Heart left ventricle (tissue), 16 donors: ENCODE measurements at regions of chr10 and their contacts with region 1.

Region 1: GRCh38 chr10:96395931-96396877 is 37.4 kb upstream of the OPALIN start:
- DNase-seq: peak; percentile 63 to 71 (median 68)
- ATAC-seq: peak in 3 of 4 donors; percentile 61 to 74 (median 63)
- H3K4me3 ChIP-seq: no peak overlapping the region
- H3K27ac ChIP-seq: peak overlapping the region in 1 of 12 donors; percentile 70
- H3K4me1 ChIP-seq: peaks cover 0 to 49% (median 15%) of the 10 kb centered on the region in 12 donors
- H3K27me3 ChIP-seq: peaks cover 0 to 9% (median 0%) of the 10 kb centered on the region in 9 donors
- CTCF ChIP-seq: peak; percentile 67 to 90 (median 86)
- POLR2A ChIP-seq: no peak

Region 2: GRCh38 chr10:96513698-96514561 is 117.7 kb after region 1 on chr10 and contains the start of gene TLL2:
- intact Hi-C with region 1: loop called (anchors 1 to 5 kb)
- DNase-seq: peak; percentile 88 to 94 (median 92)
- ATAC-seq: peak; percentile 96 to 97 (median 96)
- H3K4me3 ChIP-seq: peak within 1 kb of the TSS; percentile 41 to 71 (median 64)
- H3K27ac ChIP-seq: peak within 1 kb of the TSS in 11 of 12 donors; percentile 27 to 79 (median 68)
- H3K4me1 ChIP-seq: peaks cover 4 to 35% (median 16%) of the 10 kb centered on the region in 12 donors
- H3K27me3 ChIP-seq: peaks cover 0 to 33% (median 0%) of the 10 kb centered on the region in 9 donors
- CTCF ChIP-seq: peak; percentile 64 to 97 (median 76)
- POLR2A ChIP-seq: peak in 1 of 2 donors; percentile 66
- total RNA-seq, gene TLL2: 1.8 to 8.6 (median 3.6) TPM

Region 3: GRCh38 chr10:96743988-96744585 is 347.9 kb after region 1 on chr10:
- intact Hi-C with region 1: loop called in 4 of 10 experiments (anchors 5 to 10 kb)
- DNase-seq: no peak
- ATAC-seq: peak in 2 of 4 donors; percentile 42 to 56
- H3K4me3 ChIP-seq: no peak overlapping the region
- H3K27ac ChIP-seq: no peak overlapping the region
- H3K4me1 ChIP-seq: peaks cover 0 to 43% (median 0%) of the 10 kb centered on the region in 12 donors
- H3K27me3 ChIP-seq: no peaks in the 10 kb centered on the region
- CTCF ChIP-seq: peak in 11 of 12 donors; percentile 7 to 43 (median 24)
- POLR2A ChIP-seq: no peak

Region 4: GRCh38 chr10:96831867-96832720 is 435.9 kb after region 1 on chr10 and contains the start of gene LCOR:
- intact Hi-C with region 1: loop called in 6 of 10 experiments (anchors 5 to 10 kb)
- DNase-seq: peak; percentile 89 to 93 (median 91)
- ATAC-seq: peak; percentile 83 to 94 (median 91)
- H3K4me3 ChIP-seq: peak within 1 kb of the TSS; percentile 84 to 98 (median 90)
- H3K27ac ChIP-seq: peak within 1 kb of the TSS; percentile 91 to 99 (median 96)
- H3K4me1 ChIP-seq: peaks cover 0 to 53% (median 38%) of the 10 kb centered on the region in 12 donors
- H3K27me3 ChIP-seq: no peaks in the 10 kb centered on the region
- CTCF ChIP-seq: peak in 2 of 12 donors; percentile 23 to 29
- POLR2A ChIP-seq: peak in 1 of 2 donors; percentile 78
- total RNA-seq, gene LCOR: 9.6 to 31.4 (median 21.2) TPM

Region 5: DNA sequence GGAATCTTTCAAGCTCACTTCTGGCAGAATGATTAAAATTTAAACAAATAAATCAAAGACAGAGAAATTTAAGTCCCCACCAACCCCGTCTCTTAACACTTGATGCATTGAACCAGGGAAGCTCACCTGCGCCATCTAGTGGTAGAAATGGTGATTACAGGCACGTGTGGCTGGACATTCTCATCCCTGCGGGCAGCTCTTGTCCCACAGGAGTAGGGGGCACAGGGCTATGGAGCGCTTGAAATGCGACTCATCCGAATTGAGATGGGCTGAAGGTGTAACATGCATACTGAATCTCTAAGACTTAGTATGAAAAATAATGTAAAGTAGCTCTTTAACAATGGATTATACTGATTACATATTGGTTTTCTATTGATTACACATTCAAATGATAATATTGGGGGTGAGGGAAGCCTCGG is 814.3 kb after region 1 on chr10:
- intact Hi-C with region 1: loop called in 1 of 10 experiments (anchors 10 kb)
- DNase-seq: peak in 4 of 5 donors; percentile 45 to 63 (median 53)
- ATAC-seq: peak; percentile 49 to 73 (median 60)
- H3K4me3 ChIP-seq: no peak overlapping the region
- H3K27ac ChIP-seq: no peak overlapping the region
- H3K4me1 ChIP-seq: no peaks in the 10 kb centered on the region
- H3K27me3 ChIP-seq: no peaks in the 10 kb centered on the region
- CTCF ChIP-seq: peak in 11 of 12 donors; percentile 88 to 100 (median 97)
- POLR2A ChIP-seq: no peak